H1 (cell line): ENCODE measurements at regions of chr14 and their contacts with region 1.

Region 1: GRCh38 chr14:37241198-37241597 is 43.5 kb downstream of the MIPOL1 start:
- DNase-seq: no peak
- H3K4me3 ChIP-seq: no peak overlapping the region
- H3K27ac ChIP-seq: no peak overlapping the region
- H3K4me1 ChIP-seq: peaks cover 0 to 3% (median 1%) of the 10 kb centered on the region in 4 experiments; a peak in 3 of 7 replicates
- H3K27me3 ChIP-seq: no peaks in the 10 kb centered on the region
- CTCF ChIP-seq: no peak
- EP300 ChIP-seq: no peak
- POLR2A ChIP-seq: no peak
- RAD21 ChIP-seq: no peak

Region 2: DNA sequence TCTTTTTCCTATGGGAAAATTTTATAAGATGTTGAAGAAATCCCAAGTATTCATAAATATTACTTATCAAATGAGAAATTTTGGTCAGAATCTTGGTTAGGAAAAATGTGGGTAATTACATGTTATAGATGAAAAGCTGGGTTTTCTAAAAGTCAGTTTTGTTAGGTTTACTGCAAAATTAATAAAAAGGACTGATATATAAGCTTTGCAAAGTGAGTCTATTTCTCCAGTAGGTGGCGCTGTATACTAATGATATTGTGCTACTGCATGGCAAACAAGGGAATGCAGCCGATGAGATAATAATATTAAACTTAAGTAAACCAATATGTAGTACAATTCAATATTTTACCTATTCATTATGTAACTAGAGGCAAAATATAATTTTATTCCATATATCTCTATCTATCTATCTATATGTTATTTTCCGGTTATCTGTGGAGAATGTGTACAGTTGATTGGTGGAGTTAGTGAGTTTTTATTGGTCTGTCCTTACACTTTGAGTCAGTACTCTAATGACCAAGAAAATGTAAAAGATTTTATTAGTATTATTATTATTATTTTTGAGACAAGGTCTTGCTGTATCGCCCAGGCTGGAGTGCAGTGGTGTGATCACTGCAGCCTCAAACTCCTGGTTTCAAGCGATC is 10.5 kb before region 1 on chr14:
- CTCF ChIA-PET with region 1: interaction called, 13 read pairs
- POLR2A ChIA-PET with region 1: no interaction called
- DNase-seq: no peak
- H3K4me3 ChIP-seq: no peak overlapping the region
- H3K27ac ChIP-seq: no peak overlapping the region
- H3K4me1 ChIP-seq: no peaks in the 10 kb centered on the region
- H3K27me3 ChIP-seq: no peaks in the 10 kb centered on the region
- CTCF ChIP-seq: peak in 2 of 3 experiments; percentile 41 to 61; a peak in 2 of 4 replicates
- EP300 ChIP-seq: no peak
- POLR2A ChIP-seq: no peak
- RAD21 ChIP-seq: peak; percentile 36 to 49; a peak in 3 of 4 replicates